Psoas muscle (tissue), 8 donors: ENCODE measurements at regions of chr2 and their contacts with region 1.

Region 1: DNA sequence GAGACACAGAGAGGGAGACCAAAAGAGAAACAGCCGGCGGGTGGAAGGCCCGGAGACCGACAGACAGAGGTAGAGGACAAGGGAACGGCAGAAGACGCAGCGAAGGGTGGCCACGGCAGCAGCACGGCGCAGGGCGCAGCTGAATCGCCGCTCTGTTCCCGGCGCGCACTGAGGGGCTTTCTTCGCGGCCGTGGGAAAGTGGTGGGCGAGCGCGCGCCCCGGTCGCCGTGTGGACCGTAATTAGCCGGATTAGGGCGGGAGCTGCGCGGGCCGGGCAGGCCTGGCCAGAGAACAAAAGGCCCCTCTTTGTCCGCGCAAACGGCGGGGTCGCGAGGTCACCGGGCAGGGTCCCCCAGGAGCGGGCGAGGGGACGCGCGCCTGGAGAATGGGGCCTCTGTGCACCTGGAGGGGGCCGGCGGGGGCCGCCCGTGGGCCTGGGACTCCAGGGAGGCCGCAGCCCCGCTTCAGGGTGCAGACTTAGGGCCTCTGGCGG is 158.3 kb downstream of the ZFP36L2 start:
- DNase-seq: no peak
- ATAC-seq: no peak
- H3K4me3 ChIP-seq: peak overlapping the region; percentile 34
- H3K27ac ChIP-seq: no peak overlapping the region
- H3K4me1 ChIP-seq: peaks cover 24% of the 10 kb centered on the region
- H3K27me3 ChIP-seq: no peaks in the 10 kb centered on the region
- CTCF ChIP-seq: no peak

Region 2: GRCh38 chr2:42342061-42342794 is 725.9 kb before region 1 on chr2:
- intact Hi-C with region 1: no loop called
- DNase-seq: peak; percentile 61 to 76
- ATAC-seq: peak; percentile 95 to 98 (median 98)
- H3K4me3 ChIP-seq: peak overlapping the region; percentile 2
- H3K27ac ChIP-seq: peak overlapping the region; percentile 73
- H3K4me1 ChIP-seq: peaks cover 14% of the 10 kb centered on the region
- H3K27me3 ChIP-seq: no peaks in the 10 kb centered on the region
- CTCF ChIP-seq: no peak

Region 3: GRCh38 chr2:42974721-42975717 is 93.1 kb before region 1 on chr2:
- intact Hi-C with region 1: loop called in 1 of 2 experiments (anchors 5 kb)
- DNase-seq: peak; percentile 83 to 90
- ATAC-seq: peak; percentile 90 to 96 (median 92)
- H3K4me3 ChIP-seq: peak overlapping the region; percentile 57
- H3K27ac ChIP-seq: no peak overlapping the region
- H3K4me1 ChIP-seq: peaks cover 4% of the 10 kb centered on the region
- H3K27me3 ChIP-seq: no peaks in the 10 kb centered on the region
- CTCF ChIP-seq: peak; percentile 89